Ovary (tissue), 10 donors: ENCODE measurements at regions of chr1 and their contacts with region 1.

Region 1: GRCh38 chr1:182588500-182589452 is at the start of gene RNASEL:
- DNase-seq: peak; percentile 78 to 83 (median 81)
- H3K4me3 ChIP-seq: peak within 1 kb of the TSS; percentile 65
- H3K27ac ChIP-seq: peak within 1 kb of the TSS; percentile 69 to 95
- H3K4me1 ChIP-seq: peaks cover 4% of the 10 kb centered on the region
- H3K27me3 ChIP-seq: no peaks in the 10 kb centered on the region
- CTCF ChIP-seq: no peak
- EP300 ChIP-seq: no peak
- POLR2A ChIP-seq: peak; percentile 77
- total RNA-seq, gene RNASEL: 6.7 to 14.1 (median 9.7) TPM

Region 2: DNA sequence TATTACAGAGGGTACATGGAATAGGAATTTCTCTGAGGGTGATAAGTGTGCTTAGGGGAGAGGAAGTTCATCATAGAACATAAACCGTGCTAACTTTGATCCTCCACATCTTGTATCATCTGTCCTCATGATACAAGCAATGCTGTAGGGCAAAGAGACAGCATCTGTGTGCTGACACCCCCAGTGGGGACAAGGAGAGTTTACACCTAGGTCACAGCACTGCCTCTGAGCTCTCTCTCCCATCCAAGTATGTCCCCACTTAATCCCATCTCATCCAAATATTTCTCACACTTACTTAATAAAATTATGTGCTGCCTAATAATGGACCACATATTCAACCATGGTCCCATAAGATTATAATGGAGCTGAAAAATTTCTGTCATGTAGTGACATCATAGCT is 184.0 kb before region 1 on chr1:
- intact Hi-C with region 1: loop called in 1 of 4 experiments (anchors 10 kb)
- DNase-seq: no peak
- H3K4me3 ChIP-seq: no peak overlapping the region
- H3K27ac ChIP-seq: no peak overlapping the region
- H3K4me1 ChIP-seq: no peaks in the 10 kb centered on the region
- H3K27me3 ChIP-seq: no peaks in the 10 kb centered on the region
- CTCF ChIP-seq: no peak
- EP300 ChIP-seq: no peak
- POLR2A ChIP-seq: no peak